Activated CD4-positive, alpha-beta memory T cell treated with anti-CD3 and anti-CD28 coated beads, Interleukin-2, amount 10 ng/mL, durations not matched to agents 7 days and 5 days (primary cell): ENCODE measurements at regions of chr5 and their contacts with region 1.

Region 1: DNA sequence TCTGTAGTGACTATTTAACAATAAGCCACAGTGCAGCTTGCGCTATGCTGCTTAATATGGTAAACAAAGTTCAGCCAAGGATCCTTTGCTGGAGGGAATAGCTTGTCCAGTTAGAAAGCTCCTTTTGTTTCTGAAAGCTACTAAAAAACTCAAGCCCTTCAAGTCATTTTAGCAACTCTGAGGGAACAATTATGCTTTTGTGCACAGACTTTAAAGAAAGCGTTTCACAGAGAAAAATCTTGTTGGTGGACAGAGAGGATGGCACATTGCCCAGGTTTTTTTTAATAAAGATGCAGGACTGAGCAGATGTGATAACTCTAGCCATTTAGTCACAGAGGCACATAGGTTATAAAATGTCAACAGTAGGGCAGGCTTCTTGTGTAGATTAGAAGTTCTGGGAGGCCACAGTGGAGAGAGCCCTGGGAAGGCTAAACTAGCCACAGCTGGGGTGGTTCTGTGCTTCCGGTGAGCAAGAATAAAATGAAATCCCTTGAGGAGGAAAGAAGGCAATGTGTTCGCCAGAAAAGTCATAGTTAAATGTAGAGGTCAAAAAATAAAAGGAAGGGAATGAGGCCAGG is 63.4 kb downstream of the ALDH7A1 start:
- DNase-seq: no peak
- H3K4me3 Mint-ChIP-seq: no peak overlapping the region
- H3K27ac Mint-ChIP-seq: no peak overlapping the region
- H3K4me1 Mint-ChIP-seq: no peaks in the 10 kb centered on the region
- H3K27me3 Mint-ChIP-seq: peaks cover 5% of the 10 kb centered on the region

Region 2: GRCh38 chr5:126471875-126472537 is 59.6 kb before region 1 on chr5:
- CTCF ChIA-PET with region 1: no interaction called
- POLR2A ChIA-PET with region 1: no interaction called
- DNase-seq: no peak
- H3K4me3 Mint-ChIP-seq: no peak overlapping the region
- H3K27ac Mint-ChIP-seq: no peak overlapping the region
- H3K4me1 Mint-ChIP-seq: no peaks in the 10 kb centered on the region
- H3K27me3 Mint-ChIP-seq: no peaks in the 10 kb centered on the region

Region 3: GRCh38 chr5:126544087-126544740 is 12.6 kb after region 1 on chr5:
- CTCF ChIA-PET with region 1: interaction called, 10 read pairs
- POLR2A ChIA-PET with region 1: no interaction called
- DNase-seq: peak; percentile 47
- H3K4me3 Mint-ChIP-seq: no peak overlapping the region
- H3K27ac Mint-ChIP-seq: no peak overlapping the region
- H3K4me1 Mint-ChIP-seq: no peaks in the 10 kb centered on the region
- H3K27me3 Mint-ChIP-seq: peaks cover 2% of the 10 kb centered on the region